HEK293 (cell line): ENCODE measurements at regions of chr20 and their contacts with region 1.

Region 1: GRCh38 chr20:44733341-44734069 is 12.2 kb upstream of the KCNK15 start:
- H3K4me3 ChIP-seq: no peak overlapping the region
- H3K27ac ChIP-seq: no peak overlapping the region
- H3K4me1 ChIP-seq: peaks cover 7% of the 10 kb centered on the region
- CTCF ChIP-seq: peak; percentile 83

Region 2: DNA sequence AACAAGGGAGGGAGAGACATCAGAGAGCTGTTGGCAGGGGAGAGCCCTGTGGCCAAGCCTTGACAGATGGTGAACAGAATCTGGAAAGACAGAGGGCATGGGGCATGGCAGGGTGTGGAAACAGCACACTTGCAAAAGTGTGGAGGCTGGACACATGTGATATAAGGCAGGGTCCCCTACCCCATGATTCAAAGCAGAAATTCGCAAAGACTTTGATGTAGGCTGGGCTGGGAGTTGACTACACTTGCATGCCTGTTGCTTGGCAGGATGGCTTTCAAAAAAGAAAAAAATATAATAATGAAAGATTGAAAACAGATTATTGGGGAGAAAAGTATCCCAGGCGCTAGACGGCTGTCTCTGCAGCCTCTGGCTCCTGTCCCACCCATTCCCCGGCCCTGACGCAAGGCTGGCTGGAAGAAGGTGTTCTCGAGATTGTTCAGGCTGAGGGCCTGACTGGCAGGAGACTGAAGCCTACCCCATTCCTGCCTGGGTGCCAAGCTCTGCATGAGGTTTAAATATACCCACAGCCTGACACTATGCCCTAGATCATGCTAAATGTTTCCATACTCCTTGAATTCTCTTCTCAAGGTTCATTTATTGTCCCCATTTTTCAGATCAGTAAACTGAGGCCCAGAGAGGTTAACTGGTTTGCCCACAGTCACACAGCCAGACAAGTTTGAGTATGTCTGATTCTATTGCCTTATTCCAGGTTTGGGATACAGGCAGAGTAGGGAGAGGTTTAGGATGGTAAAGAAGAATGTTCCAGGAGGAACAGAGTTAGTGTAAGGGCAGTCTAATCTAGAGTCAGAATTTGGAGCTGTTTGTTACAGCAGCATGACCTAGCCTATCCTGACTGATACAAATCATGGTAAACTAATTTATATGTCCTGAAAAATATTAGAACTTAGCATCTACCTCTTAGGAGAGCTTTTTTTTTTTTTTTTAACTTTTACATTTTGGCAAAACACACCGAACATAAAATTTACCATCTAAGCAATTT is 41.8 kb before region 1 on chr20:
- CTCF ChIA-PET with region 1: interaction called, 208 read pairs
- POLR2A ChIA-PET with region 1: interaction called, 3 read pairs
- H3K4me3 ChIP-seq: no peak overlapping the region
- H3K27ac ChIP-seq: no peak overlapping the region
- H3K4me1 ChIP-seq: no peaks in the 10 kb centered on the region
- CTCF ChIP-seq: no peak